ENCODE measurements at regions of chr4 and their contacts with region 1.

Region 1: DNA sequence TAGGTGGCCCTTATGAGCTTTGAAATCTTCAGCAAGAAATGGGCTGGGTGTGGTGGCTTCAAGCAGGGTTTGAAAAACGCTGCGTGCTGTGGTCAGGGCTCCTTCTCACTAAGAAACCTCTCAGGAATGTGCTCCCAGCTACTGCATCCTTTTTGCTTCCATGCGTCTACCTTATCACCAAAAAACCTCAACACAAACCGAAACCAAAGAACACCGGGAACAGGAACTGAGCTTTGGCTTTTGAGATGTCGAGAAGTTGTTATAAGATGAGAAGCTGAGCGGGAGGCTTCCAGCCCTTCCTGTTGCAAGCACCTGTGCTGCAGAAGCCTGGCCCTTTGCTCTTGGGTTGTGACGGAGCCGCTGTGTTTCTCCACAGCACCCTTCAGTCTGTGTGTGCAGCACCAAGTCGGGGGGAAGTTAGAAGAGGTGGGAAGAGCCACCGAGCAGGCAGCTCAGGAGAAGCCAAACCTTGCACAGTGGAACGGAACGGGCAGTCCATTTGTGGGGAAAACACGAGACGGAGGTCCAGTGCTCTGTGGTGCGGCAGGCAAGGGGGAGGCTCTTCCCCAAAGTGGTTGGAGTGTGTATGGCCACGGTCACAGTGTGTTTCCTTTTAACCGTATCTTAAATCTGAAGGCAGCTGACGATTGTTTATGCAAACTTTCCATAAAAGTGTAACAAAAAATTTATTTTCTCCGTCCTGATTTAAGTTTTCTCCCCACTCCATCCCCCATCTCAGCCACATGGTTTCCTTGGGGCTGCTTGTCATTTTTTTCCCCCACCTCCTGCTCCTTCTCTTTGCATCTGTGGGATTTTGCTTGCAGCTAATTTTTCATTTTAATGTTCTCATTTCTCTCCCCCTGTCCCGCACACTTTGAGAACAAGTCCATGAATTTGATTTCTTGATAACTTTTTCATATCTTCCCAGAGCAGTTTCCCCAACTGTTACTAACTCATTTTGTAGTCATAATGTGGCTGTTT is 123.6 kb downstream of the STOX2 start:
- DNase-seq: peak; percentile 25 to 51
- H3K4me3 ChIP-seq: peak overlapping the region; percentile 62
- H3K27ac ChIP-seq: no peak overlapping the region
- H3K4me1 ChIP-seq: no peaks in the 10 kb centered on the region
- H3K27me3 ChIP-seq: no peaks in the 10 kb centered on the region
- CTCF ChIP-seq: no peak

Region 2: GRCh38 chr4:183987987-183988392 is 40.7 kb before region 1 on chr4:
- CTCF ChIA-PET with region 1: no interaction called
- POLR2A ChIA-PET with region 1: no interaction called
- intact Hi-C with region 1: loop called (anchors 1 kb)
- DNase-seq: peak; percentile 79 to 89
- H3K4me3 ChIP-seq: peak overlapping the region; percentile 60
- H3K27ac ChIP-seq: peak overlapping the region; percentile 78
- H3K4me1 ChIP-seq: peaks cover 12% of the 10 kb centered on the region
- H3K27me3 ChIP-seq: no peaks in the 10 kb centered on the region
- CTCF ChIP-seq: no peak

Region 3: DNA sequence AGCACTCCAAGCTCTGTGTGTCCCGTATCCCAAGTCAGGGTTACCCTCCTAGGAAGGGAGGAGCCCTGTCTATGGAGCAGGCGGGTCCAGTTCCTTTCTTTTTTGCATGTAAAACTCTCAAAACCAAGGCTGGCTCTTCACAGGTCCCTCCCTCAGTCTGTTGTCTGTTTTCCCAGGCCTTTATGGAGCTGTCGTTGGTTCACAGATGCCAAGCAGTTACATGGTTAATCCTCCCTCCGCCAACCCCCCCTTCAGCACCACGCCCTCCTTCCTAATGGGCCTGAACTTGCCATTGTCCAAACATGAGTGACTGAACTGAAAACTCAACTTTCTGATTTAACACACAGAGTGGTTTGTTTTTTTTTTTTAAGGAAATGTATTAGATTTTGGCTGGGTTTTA is 24.8 kb after region 1 on chr4:
- CTCF ChIA-PET with region 1: no interaction called
- POLR2A ChIA-PET with region 1: no interaction called
- intact Hi-C with region 1: no loop called
- DNase-seq: no peak
- H3K4me3 ChIP-seq: no peak overlapping the region
- H3K27ac ChIP-seq: no peak overlapping the region
- H3K4me1 ChIP-seq: no peaks in the 10 kb centered on the region
- H3K27me3 ChIP-seq: no peaks in the 10 kb centered on the region
- CTCF ChIP-seq: no peak

Measured in PC-9 (cell line).